ENCODE measurements at regions of chr10 and their contacts with region 1.

Region 1: DNA sequence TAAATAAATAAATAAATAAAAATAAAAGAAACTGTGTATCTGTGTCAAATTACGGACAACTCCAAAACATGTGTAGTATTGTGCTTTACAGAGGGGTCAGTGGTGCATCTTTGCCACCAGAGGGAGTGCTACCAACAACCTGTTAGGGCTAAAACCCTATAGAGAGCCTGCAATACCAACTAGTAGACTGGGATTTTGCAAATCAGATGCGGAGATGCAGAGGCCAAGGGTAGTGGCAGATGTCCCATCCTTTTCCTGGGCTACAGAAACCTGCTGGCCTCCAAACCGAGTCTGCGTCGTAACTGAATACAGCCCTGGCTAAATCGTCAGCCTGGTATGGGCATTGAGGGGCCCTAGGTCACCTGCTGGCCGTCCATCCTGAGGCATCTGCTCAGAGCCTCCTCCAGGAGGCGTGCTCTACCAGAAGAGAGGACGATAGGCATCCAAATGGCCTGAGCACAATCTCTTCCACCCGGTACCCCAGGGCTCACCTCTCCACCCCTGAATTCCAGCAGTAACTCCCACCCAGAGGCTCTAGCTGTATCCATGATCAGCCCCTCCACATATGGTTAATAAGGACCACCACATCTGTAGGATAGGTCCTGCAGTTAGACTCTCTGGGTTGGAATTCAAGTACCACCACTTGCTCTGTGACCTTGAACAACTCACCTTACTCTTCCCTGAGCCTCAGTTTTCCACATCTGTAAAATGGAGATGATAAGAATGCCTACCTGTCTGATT is 6.2 kb upstream of the RRP12 start:
- DNase-seq: peak; percentile 48
- ATAC-seq: peak; percentile 90

Region 2: GRCh38 chr10:97618285-97618684 is 210.9 kb after region 1 on chr10:
- intact Hi-C with region 1: loop called (anchors 5 kb)
- DNase-seq: no peak
- ATAC-seq: no peak

Region 3: DNA sequence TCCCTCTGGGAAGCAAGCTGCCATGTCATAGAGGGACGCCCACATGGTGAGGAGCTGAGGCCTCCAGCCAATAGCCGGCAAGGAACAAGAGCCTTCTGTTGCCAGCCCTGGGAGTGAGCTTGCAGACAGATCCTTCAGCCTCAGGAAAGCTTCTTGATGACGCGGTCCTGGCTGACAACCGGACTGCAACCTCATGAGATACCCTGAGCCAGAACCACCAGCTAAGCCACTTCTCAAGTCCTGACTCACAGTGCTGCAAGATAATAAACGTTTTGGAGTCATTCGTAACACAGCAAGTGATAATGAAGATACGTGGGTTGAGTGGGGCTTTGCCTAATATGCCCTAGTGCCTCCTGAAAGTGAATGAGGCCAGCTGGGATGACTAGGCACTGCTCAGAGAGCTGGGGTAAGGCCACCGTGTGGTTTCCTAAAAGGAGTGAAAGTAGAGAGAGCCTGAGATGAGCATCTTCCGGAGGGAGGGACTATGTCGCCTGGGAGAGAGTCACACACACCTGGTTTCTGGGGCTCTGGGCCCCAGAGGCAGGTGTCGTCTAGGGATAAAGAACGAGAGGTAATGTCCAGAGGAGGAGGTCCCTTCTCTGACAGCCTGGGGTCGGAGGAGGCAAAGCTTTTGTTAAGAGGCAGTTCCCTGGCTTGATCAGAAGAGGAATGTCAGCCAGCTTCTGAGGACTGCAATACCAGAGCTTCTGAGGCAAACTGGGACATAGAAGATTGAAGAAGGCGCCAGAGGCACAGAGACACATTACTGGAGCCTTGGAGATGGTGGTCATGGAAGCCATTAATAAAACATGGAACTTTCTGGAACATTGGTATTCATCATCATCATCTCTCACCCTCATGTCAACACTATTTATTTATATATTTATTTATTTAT is 954.0 kb after region 1 on chr10:
- intact Hi-C with region 1: no loop called
- DNase-seq: peak; percentile 90
- ATAC-seq: peak; percentile 98

Measured in Right ventricle myocardium superior (tissue), 1 donor.